CD8-positive, alpha-beta T cell (primary cell): ENCODE measurements at regions of chr1 and their contacts with region 1.

Region 1: DNA sequence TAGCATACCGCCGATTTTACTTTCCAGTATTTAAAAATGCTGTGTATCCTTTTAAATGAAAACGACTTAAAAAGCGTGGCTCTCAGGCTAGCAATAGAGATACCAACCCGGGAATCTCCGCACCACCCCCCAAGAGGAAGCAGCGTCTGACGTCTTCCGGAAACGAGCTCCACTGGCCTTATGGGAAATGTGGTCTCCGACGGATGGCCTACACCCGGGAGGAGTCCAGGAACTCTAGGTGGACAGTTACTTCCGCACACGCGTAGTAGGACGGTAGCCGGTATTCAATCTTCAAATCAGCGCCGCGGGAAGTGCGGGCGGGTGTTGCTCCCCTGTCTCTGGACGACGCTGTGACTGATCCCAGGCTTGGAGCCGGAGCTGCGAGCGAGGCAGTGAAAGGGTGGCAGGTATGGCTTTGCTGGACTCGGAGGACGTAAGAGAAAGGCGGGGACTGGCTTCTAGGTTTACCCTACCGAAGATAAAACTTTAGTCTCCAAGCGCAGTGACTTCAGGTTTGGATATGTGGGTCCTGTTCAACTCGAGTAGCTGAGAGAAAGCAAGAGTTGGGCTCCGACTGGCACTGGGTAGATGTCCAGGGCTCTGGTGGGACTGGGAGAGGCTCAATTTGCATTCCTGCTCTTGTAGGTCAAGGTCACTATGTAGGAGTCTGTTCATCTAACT is at the start of gene ZNF684:
- DNase-seq: peak; percentile 64 to 96 (median 85)
- ATAC-seq: peak; percentile 96
- H3K4me3 ChIP-seq: peak within 1 kb of the TSS; percentile 68 to 71
- H3K4me3 Mint-ChIP-seq: peak within 1 kb of the TSS; percentile 100
- H3K27ac ChIP-seq: peak within 1 kb of the TSS; percentile 57 to 83
- H3K27ac Mint-ChIP-seq: peak within 1 kb of the TSS; percentile 93
- H3K4me1 ChIP-seq: peaks cover 11% of the 10 kb centered on the region
- H3K4me1 Mint-ChIP-seq: peaks cover 28% of the 10 kb centered on the region
- H3K27me3 ChIP-seq: peaks cover 0 to 3% of the 10 kb centered on the region in 2 experiments
- H3K27me3 Mint-ChIP-seq: peaks cover 6% of the 10 kb centered on the region
- CTCF ChIP-seq: no peak
- total RNA-seq, gene ZNF684: 2.9 TPM

Region 2: GRCh38 chr1:40096977-40097782 is 434.3 kb before region 1 on chr1 and contains the start of gene PPT1:
- CTCF ChIA-PET with region 1: no interaction called
- POLR2A ChIA-PET with region 1: no interaction called
- intact Hi-C with region 1: loop called in 1 of 2 experiments (anchors 5 kb)
- DNase-seq: peak; percentile 58 to 90 (median 77)
- ATAC-seq: peak; percentile 83
- H3K4me3 ChIP-seq: peak within 1 kb of the TSS; percentile 55 to 57
- H3K4me3 Mint-ChIP-seq: peak within 1 kb of the TSS; percentile 91
- H3K27ac ChIP-seq: peak within 1 kb of the TSS; percentile 24 to 51
- H3K27ac Mint-ChIP-seq: peak within 1 kb of the TSS; percentile 94
- H3K4me1 ChIP-seq: peaks cover 23% of the 10 kb centered on the region
- H3K4me1 Mint-ChIP-seq: peaks cover 32% of the 10 kb centered on the region
- H3K27me3 ChIP-seq: peaks cover 0 to 4% of the 10 kb centered on the region in 2 experiments
- H3K27me3 Mint-ChIP-seq: no peaks in the 10 kb centered on the region
- CTCF ChIP-seq: peak; percentile 52
- total RNA-seq, gene PPT1: 32.2 to 34.2 TPM

Region 3: DNA sequence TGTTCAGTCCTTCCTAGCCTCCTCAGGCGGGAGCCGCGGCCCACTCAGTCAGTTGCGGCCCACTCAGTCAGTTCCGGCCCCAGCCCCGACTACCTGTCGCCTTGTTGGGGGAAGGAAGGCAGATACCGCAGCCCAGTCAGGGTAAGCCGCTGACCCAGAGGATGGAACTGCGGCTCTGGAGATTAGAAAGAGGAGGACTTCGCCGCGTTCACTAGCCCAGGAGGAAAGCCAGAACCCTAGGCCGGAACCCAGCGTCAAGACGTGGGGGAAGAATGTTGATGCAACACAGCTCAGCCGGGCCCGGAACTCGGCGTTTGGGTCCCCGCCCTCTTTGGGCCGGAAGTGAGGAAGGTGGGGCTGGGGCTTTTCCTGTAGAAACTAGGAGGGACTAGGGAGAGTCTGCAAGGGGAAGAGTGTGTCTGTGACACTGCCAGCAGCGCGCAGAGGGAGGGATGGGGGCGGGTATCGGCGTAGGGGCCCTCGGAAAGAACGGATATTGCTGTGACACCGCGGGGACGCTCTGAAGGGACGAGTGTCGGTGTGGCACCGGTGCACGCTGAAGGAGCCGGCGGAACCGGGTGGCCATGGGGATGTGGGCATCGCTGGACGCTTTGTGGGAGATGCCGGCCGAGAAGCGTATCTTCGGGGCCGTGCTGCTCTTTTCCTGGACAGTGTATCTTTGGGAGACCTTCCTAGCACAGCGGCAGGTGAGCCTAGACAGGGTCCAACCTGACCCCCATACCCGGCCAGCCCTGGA is 273.7 kb before region 1 on chr1 and contains the start of gene ZMPSTE24:
- CTCF ChIA-PET with region 1: no interaction called
- POLR2A ChIA-PET with region 1: no interaction called
- intact Hi-C with region 1: loop called (anchors 1 to 5 kb)
- DNase-seq: peak; percentile 92 to 99 (median 95)
- ATAC-seq: peak; percentile 95
- H3K4me3 ChIP-seq: peak within 1 kb of the TSS; percentile 95 to 98
- H3K4me3 Mint-ChIP-seq: peak within 1 kb of the TSS; percentile 98
- H3K27ac ChIP-seq: peak within 1 kb of the TSS; percentile 88 to 99
- H3K27ac Mint-ChIP-seq: peak within 1 kb of the TSS; percentile 100
- H3K4me1 ChIP-seq: peaks cover 20% of the 10 kb centered on the region
- H3K4me1 Mint-ChIP-seq: peaks cover 56% of the 10 kb centered on the region
- H3K27me3 ChIP-seq: no peaks in the 10 kb centered on the region
- H3K27me3 Mint-ChIP-seq: no peaks in the 10 kb centered on the region
- CTCF ChIP-seq: no peak
- total RNA-seq, gene ZMPSTE24: 11.5 to 12.2 TPM

Region 4: GRCh38 chr1:40449684-40450494 is 81.6 kb before region 1 on chr1 and contains the start of gene ZFP69B:
- CTCF ChIA-PET with region 1: interaction called, 6 read pairs
- POLR2A ChIA-PET with region 1: interaction called, 10 read pairs
- intact Hi-C with region 1: loop called (anchors 1 to 2 kb)
- DNase-seq: peak; percentile 68 to 94 (median 89)
- ATAC-seq: peak; percentile 54
- H3K4me3 ChIP-seq: peak within 1 kb of the TSS; percentile 72 to 81
- H3K4me3 Mint-ChIP-seq: peak within 1 kb of the TSS; percentile 89
- H3K27ac ChIP-seq: peak within 1 kb of the TSS; percentile 54 to 67
- H3K27ac Mint-ChIP-seq: peak within 1 kb of the TSS; percentile 93
- H3K4me1 ChIP-seq: peaks cover 18% of the 10 kb centered on the region
- H3K4me1 Mint-ChIP-seq: peaks cover 25% of the 10 kb centered on the region
- H3K27me3 ChIP-seq: no peaks in the 10 kb centered on the region
- H3K27me3 Mint-ChIP-seq: no peaks in the 10 kb centered on the region
- CTCF ChIP-seq: no peak
- total RNA-seq, gene ZFP69B: 3.4 to 4.2 TPM

Region 5: GRCh38 chr1:40508375-40509341 is 22.9 kb before region 1 on chr1 and contains the start of gene EXO5:
- CTCF ChIA-PET with region 1: interaction called, 10 read pairs
- POLR2A ChIA-PET with region 1: interaction called, 6 read pairs
- intact Hi-C with region 1: loop called (anchors 1 kb)
- DNase-seq: peak; percentile 60 to 89 (median 80)
- ATAC-seq: peak; percentile 98
- H3K4me3 ChIP-seq: peak within 1 kb of the TSS; percentile 79 to 95
- H3K4me3 Mint-ChIP-seq: peak within 1 kb of the TSS; percentile 90
- H3K27ac ChIP-seq: peak within 1 kb of the TSS; percentile 54 to 72
- H3K27ac Mint-ChIP-seq: peak within 1 kb of the TSS; percentile 77
- H3K4me1 ChIP-seq: peaks cover 9% of the 10 kb centered on the region
- H3K4me1 Mint-ChIP-seq: peaks cover 19% of the 10 kb centered on the region
- H3K27me3 ChIP-seq: no peaks in the 10 kb centered on the region
- H3K27me3 Mint-ChIP-seq: no peaks in the 10 kb centered on the region
- CTCF ChIP-seq: no peak
- total RNA-seq, gene EXO5: 6.7 to 7.6 TPM

Region 6: DNA sequence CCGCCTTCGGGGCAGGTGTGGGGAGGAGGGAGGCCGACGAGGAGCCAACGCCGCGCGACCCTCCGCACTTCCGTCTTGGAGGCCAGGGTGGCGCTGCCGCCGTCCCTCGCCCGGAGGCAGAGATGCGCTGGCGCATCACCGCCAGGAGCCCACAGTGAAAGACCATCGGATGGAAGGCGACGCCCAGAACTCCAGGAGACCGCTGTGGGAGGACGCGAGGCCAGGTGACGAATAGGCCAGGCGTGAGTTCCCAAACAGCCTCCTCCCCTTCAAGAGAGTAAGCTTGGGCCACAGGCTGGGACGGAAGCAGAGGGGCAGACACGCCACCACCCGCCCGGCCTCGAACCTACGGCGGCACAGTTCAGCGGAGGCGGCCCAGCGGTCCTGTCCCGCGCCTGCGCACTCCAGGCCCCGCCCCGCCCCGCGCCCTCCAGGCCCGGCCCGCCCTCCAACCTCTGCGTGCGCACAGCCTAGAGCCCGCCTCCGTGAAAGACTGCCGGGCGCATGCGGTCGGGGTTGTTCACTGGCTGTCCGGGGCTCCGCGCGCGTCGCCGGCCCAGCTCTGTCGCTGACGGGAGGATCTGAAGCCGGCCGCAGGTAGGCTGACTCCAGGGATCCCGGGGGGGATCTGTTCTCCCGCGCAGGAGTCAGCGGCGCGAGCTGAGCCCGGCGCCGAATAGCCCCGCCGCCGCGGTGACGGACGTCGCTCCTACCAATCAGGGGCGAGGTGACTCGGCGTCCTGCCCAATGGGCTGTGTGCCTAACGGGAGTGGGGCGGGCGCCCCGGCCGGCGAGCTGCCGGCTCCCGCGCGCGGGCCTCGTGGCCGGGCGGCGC is 447.9 kb after region 1 on chr1 and contains the start of gene CTPS1:
- CTCF ChIA-PET with region 1: no interaction called
- POLR2A ChIA-PET with region 1: no interaction called
- intact Hi-C with region 1: loop called in 1 of 2 experiments (anchors 2 kb)
- DNase-seq: peak; percentile 92 to 98 (median 95)
- ATAC-seq: peak; percentile 81
- H3K4me3 ChIP-seq: peak within 1 kb of the TSS; percentile 83 to 91
- H3K4me3 Mint-ChIP-seq: peak within 1 kb of the TSS; percentile 95
- H3K27ac ChIP-seq: peak within 1 kb of the TSS; percentile 85 to 95
- H3K27ac Mint-ChIP-seq: peak within 1 kb of the TSS; percentile 97
- H3K4me1 ChIP-seq: peaks cover 16% of the 10 kb centered on the region
- H3K4me1 Mint-ChIP-seq: peaks cover 35% of the 10 kb centered on the region
- H3K27me3 ChIP-seq: no peaks in the 10 kb centered on the region
- H3K27me3 Mint-ChIP-seq: no peaks in the 10 kb centered on the region
- CTCF ChIP-seq: no peak
- total RNA-seq, gene CTPS1: 68.5 to 69.0 TPM